ENCODE measurements at regions of chr2 and their contacts with region 1.

Region 1: DNA sequence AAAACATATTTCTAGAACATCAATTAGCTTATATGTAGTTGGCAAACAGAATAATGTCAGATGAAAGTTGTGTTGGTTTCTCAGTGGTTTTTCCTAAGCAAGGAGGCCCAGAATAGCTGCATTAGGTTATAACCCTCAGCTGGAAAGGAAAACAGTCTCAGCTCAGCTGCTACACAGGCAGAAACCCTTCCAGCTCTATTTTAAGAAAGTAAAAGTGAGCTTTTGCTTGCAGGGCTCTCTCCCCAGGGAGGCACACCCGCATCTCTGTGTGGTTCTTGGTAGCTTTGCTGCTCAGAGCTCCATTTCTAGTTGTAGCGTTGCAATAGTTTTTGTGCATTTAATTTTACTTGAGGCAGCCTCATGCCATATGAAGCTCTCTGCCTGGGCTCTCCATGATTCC is 54.6 kb downstream of the PIKFYVE start:
- DNase-seq: peak; percentile 19
- ATAC-seq: peak; percentile 77
- H3K4me3 ChIP-seq: no peak overlapping the region
- H3K27ac ChIP-seq: no peak overlapping the region
- H3K4me1 ChIP-seq: peaks cover 22% of the 10 kb centered on the region
- H3K27me3 ChIP-seq: no peaks in the 10 kb centered on the region
- CTCF ChIP-seq: no peak
- EP300 ChIP-seq: no peak
- POLR2A ChIP-seq: no peak
- RAD21 ChIP-seq: no peak; the same call in 1 of the 2 replicates

Region 2: DNA sequence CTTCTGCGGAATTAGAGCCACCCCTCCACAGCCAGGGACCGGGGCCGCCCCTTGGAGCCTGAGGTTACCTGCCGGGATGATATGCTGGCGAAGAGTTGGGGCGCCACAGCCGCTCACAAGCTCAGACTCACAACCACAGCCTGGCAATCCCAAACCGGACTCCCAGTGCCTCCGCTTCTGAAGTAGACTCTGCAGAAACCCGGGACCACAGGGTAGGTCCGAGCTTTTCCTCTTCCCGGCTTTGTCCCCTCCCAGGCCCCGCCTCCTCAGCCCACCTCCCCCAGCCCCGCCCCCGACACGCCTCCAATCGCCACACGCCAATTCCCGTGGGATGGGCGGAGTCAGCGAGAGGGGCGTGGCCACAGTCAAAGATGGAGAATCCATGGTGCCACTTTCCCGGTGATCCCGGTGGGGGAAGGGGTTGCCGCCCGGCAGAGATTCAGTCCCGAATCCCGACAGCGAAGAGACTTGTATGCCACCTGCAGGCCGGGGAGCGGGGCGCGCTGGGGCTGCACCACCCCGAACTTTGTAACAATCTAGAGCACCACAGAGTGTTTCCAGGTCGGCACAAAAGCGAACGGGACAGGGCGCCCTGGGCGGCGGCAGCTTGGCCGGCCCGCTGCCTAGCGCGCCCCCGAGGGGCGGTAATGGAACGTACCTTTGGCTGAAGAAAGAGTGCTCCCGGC is 65.7 kb before region 1 on chr2 and contains the start of gene IDH1:
- CTCF ChIA-PET with region 1: interaction called, 36 read pairs
- POLR2A ChIA-PET with region 1: interaction called, 7 read pairs
- RAD21 ChIA-PET with region 1: interaction called, 35 read pairs
- SMC1A ChIA-PET with region 1: interaction called, 25 read pairs
- in situ Hi-C with region 1: no loop called
- intact Hi-C with region 1: no loop called
- DNase-seq: peak; percentile 60
- ATAC-seq: peak; percentile 80
- H3K4me3 ChIP-seq: peak within 1 kb of the TSS; percentile 98
- H3K27ac ChIP-seq: peak within 1 kb of the TSS; percentile 35
- H3K4me1 ChIP-seq: no peaks in the 10 kb centered on the region; the same call in 1 of the 2 replicates
- H3K27me3 ChIP-seq: no peaks in the 10 kb centered on the region
- CTCF ChIP-seq: peak; percentile 37 to 52 (median 44); a peak in 5 of 6 replicates
- EP300 ChIP-seq: no peak
- POLR2A ChIP-seq: peak; percentile 52; the same call in 1 of the 2 replicates
- RAD21 ChIP-seq: no peak
- polyA plus RNA-seq, gene IDH1: 56.0 to 67.7 TPM

Region 3: GRCh38 chr2:208363485-208363884 is 42.8 kb after region 1 on chr2:
- CTCF ChIA-PET with region 1: interaction called, 11 read pairs
- POLR2A ChIA-PET with region 1: interaction called, 4 read pairs
- RAD21 ChIA-PET with region 1: interaction called, 7 read pairs
- SMC1A ChIA-PET with region 1: interaction called, 3 read pairs
- in situ Hi-C with region 1: no loop called
- intact Hi-C with region 1: no loop called
- DNase-seq: peak; percentile 23
- ATAC-seq: peak; percentile 75
- H3K4me3 ChIP-seq: no peak overlapping the region
- H3K27ac ChIP-seq: no peak overlapping the region
- H3K4me1 ChIP-seq: no peaks in the 10 kb centered on the region; the same call in 1 of the 2 replicates
- H3K27me3 ChIP-seq: no peaks in the 10 kb centered on the region
- CTCF ChIP-seq: no peak
- EP300 ChIP-seq: no peak
- POLR2A ChIP-seq: no peak
- RAD21 ChIP-seq: no peak